Common myeloid progenitor, CD34-positive (primary cell): ENCODE measurements at regions of chr9 and their contacts with region 1.

Region 1: GRCh38 chr9:133768859-133769425 is 30.8 kb upstream of the SARDH start:
- DNase-seq: peak in 1 of 3 donors; percentile 14
- H3K4me3 ChIP-seq: no peak overlapping the region
- H3K27ac ChIP-seq: no peak overlapping the region
- H3K4me1 ChIP-seq: no peaks in the 10 kb centered on the region
- H3K27me3 ChIP-seq: no peaks in the 10 kb centered on the region

Region 2: GRCh38 chr9:133387425-133388079 is 381.4 kb before region 1 on chr9:
- CTCF ChIA-PET with region 1: no interaction called
- POLR2A ChIA-PET with region 1: no interaction called
- DNase-seq: no peak
- H3K4me3 ChIP-seq: no peak overlapping the region
- H3K27ac ChIP-seq: no peak overlapping the region
- H3K4me1 ChIP-seq: no peaks in the 10 kb centered on the region
- H3K27me3 ChIP-seq: no peaks in the 10 kb centered on the region

Region 3: GRCh38 chr9:133782157-133783130 is 13.5 kb after region 1 on chr9:
- CTCF ChIA-PET with region 1: interaction called, 17 read pairs
- POLR2A ChIA-PET with region 1: no interaction called
- DNase-seq: peak; percentile 73 to 91 (median 83)
- H3K4me3 ChIP-seq: no peak overlapping the region
- H3K27ac ChIP-seq: no peak overlapping the region
- H3K4me1 ChIP-seq: peaks cover 0 to 15% (median 3%) of the 10 kb centered on the region in 4 experiments
- H3K27me3 ChIP-seq: peaks cover 0 to 9% (median 0%) of the 10 kb centered on the region in 5 experiments